Activated CD8-positive, alpha-beta memory T cell treated with anti-CD3 and anti-CD28 coated beads, Interleukin-2, amount 10 ng/mL, durations not matched to agents 7 days and 5 days (primary cell): ENCODE measurements at regions of chr22 and their contacts with region 1.

Region 1: DNA sequence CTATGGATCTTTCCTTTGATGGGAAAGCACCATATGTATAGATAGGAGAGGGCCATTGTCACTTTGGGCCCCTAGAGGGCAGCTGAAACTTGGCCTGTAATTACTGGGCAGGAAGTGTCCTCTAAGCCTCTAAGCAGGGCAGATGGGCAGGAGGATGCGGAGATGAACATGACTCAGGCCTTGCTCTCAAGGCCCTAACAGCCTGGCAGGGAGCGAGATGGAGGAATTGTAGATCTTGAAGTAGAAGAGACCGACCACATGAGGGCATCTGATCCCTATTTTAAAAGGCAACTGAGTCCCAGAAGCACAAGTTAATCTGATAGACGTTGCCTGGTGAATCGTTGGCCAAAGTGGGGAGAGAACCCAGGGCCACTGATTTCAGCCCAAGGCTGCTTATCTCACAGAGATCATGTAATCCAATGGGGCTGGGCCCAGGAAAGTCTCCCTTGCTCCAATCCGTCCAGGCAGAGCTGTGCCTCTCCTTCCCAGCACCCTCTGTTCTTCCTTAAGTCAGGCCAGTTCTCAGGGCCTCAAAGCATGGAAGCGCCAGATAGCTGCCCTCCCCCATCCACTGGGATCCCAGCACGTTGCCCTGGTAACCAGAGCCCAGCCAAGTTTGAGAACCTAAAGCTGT is 2.5 kb upstream of the SEPTIN3 start:
- DNase-seq: peak; percentile 68
- ATAC-seq: peak; percentile 81
- H3K4me3 Mint-ChIP-seq: no peak overlapping the region
- H3K27ac Mint-ChIP-seq: no peak overlapping the region
- H3K4me1 Mint-ChIP-seq: peaks cover 3% of the 10 kb centered on the region
- H3K27me3 Mint-ChIP-seq: peaks cover 3% of the 10 kb centered on the region

Region 2: GRCh38 chr22:42007922-42008321 is 41.2 kb after region 1 on chr22:
- CTCF ChIA-PET with region 1: no interaction called
- DNase-seq: no peak
- ATAC-seq: no peak
- H3K4me3 Mint-ChIP-seq: no peak overlapping the region
- H3K27ac Mint-ChIP-seq: no peak overlapping the region
- H3K4me1 Mint-ChIP-seq: peaks cover 5% of the 10 kb centered on the region
- H3K27me3 Mint-ChIP-seq: peaks cover 23% of the 10 kb centered on the region

Region 3: DNA sequence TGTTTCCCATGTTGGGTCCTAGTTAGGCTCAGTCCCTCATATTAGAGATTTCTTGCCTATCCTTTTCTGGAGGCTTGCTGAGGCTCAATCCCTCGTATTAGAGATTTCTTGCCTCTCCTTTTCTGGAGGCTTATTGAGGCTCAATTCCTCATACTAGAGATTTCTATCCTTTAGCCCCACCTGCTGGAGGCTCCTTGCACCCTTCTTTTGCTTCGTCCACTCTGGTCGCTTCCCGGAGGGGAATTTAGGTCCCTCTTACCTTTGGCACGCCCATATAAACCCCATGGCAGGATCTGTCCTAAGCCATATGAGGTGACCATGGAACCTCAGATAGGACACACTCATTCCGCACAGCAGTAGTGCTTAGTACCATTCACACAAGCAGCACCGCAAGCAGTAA is 148.0 kb after region 1 on chr22:
- CTCF ChIA-PET with region 1: interaction called, 18 read pairs
- DNase-seq: no peak
- ATAC-seq: no peak
- H3K4me3 Mint-ChIP-seq: no peak overlapping the region
- H3K27ac Mint-ChIP-seq: no peak overlapping the region
- H3K4me1 Mint-ChIP-seq: peaks cover 9% of the 10 kb centered on the region
- H3K27me3 Mint-ChIP-seq: no peaks in the 10 kb centered on the region